Activated naive CD8-positive, alpha-beta T cell treated with anti-CD3 and anti-CD28 coated beads, Interleukin-2, amount 10 ng/mL, durations not matched to agents 7 days and 5 days (primary cell): ENCODE measurements at regions of chr10 and their contacts with region 1.

Region 1: DNA sequence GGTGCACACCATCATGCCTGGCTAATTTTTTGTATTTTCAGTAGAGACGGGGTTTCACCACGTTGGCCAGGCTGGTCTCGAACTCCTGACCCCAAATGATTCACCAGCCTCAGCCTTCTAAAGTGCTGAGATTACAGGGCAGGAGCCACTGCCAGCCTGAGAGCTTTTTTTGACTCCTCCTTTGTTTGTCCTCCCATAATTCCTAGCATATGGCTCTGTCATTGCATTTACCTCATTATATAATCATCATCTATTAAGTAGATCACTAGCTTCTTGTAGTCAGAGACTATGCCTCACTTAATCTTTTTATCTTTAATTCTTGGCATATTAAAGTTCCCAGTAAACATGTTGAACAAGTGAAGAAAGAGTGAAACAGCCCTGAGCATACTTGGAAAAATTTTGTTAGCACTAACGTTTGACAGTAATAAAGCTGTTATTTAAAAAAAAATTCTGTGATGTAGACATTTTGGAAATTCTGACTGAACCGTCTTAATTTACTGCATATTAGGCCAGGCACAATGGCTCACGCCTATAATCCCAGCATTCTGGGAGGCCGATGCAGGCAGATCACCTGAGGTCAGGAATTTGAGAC is 82.0 kb downstream of the CPEB3 start:
- DNase-seq: no peak
- ATAC-seq: no peak
- H3K4me3 Mint-ChIP-seq: no peak overlapping the region
- H3K27ac Mint-ChIP-seq: no peak overlapping the region
- H3K4me1 Mint-ChIP-seq: peaks cover 8% of the 10 kb centered on the region
- H3K27me3 Mint-ChIP-seq: no peaks in the 10 kb centered on the region

Region 2: GRCh38 chr10:92290837-92291615 is 82.2 kb after region 1 on chr10 and contains the starts of genes CPEB3 and MARCHF5:
- POLR2A ChIA-PET with region 1: interaction called, 12 read pairs
- DNase-seq: peak; percentile 91
- ATAC-seq: peak; percentile 99
- H3K4me3 Mint-ChIP-seq: peak within 1 kb of the TSS; percentile 98
- H3K27ac Mint-ChIP-seq: peak within 1 kb of the TSS; percentile 84
- H3K4me1 Mint-ChIP-seq: peaks cover 21% of the 10 kb centered on the region
- H3K27me3 Mint-ChIP-seq: no peaks in the 10 kb centered on the region
- total RNA-seq, gene CPEB3: 3.4 to 3.5 TPM
- total RNA-seq, gene MARCHF5: 25.6 to 27.2 TPM